ENCODE measurements at regions of chr12 and their contacts with region 1.

Region 1: DNA sequence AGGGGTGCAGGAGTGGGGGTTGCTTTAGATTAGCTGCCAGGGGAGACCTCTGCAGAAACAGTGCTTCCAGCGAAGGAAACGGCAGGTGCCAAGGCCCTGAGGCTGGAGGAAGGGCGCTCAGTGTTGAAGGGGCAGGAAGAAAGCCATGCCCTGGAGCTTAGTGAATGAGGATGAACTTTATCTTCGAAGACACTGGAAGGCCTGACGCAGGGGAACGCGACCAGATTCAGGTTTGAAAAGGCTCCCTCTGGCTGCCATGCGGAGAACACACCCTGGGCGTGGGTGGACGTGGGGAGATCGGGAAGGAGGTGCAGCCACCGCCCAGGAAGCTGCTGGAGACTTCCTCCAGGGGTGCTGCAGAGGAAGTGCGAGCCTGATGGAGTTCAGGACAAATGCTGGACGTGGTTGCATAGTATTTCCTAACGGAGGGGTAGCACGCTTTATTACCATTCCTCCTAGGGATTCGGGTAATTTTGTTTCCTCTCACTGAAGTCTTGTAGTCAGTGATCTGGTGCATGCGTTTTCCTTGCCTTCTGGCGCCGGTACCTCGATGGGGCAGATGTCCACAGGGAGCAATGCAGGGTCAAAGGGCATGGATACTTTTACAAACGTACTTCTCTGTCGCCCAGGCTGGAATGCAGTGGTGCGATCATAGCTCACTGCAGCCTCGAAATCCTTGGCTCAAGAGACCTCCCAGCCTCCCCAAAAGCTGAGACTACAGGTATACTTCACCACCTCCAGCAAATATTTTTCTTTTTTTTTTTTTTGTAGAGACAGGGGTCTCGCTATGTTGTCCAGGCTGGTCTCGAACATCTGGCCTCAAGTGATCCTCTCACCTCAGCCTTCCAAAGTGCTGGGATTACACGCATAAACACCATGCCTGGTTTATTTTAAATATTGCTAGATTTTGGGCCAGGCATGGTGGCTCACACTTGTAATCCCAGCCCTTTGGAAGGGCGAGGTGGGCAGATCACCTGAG is 26.4 kb upstream of the UBC start:
- DNase-seq: peak; percentile 75 to 92
- H3K4me3 ChIP-seq: peak overlapping the region; percentile 48 to 65
- H3K27ac ChIP-seq: peak overlapping the region; percentile 83 to 92
- H3K4me1 ChIP-seq: peaks cover 0 to 15% of the 10 kb centered on the region in 2 donors
- H3K27me3 ChIP-seq: no peaks in the 10 kb centered on the region
- CTCF ChIP-seq: peak; percentile 85 to 89 (median 88)

Region 2: GRCh38 chr12:124863416-124864325 is 77.2 kb before region 1 on chr12 and contains the start of gene SCARB1:
- intact Hi-C with region 1: loop called (anchors 5 kb)
- DNase-seq: peak; percentile 39 to 90
- H3K4me3 ChIP-seq: peak within 1 kb of the TSS; percentile 82 to 83
- H3K27ac ChIP-seq: peak within 1 kb of the TSS; percentile 36 to 61
- H3K4me1 ChIP-seq: peaks cover 0 to 7% of the 10 kb centered on the region in 2 donors
- H3K27me3 ChIP-seq: no peaks in the 10 kb centered on the region
- CTCF ChIP-seq: no peak
- total RNA-seq, gene SCARB1: 81.1 TPM

Region 3: GRCh38 chr12:124917135-124917840 is 23.6 kb before region 1 on chr12:
- intact Hi-C with region 1: loop called (anchors 1 kb)
- DNase-seq: peak; percentile 96 to 99
- H3K4me3 ChIP-seq: peak overlapping the region; percentile 45 to 72
- H3K27ac ChIP-seq: peak overlapping the region; percentile 99 to 100
- H3K4me1 ChIP-seq: peaks cover 5 to 39% of the 10 kb centered on the region in 2 donors
- H3K27me3 ChIP-seq: no peaks in the 10 kb centered on the region
- CTCF ChIP-seq: no peak

Region 4: GRCh38 chr12:124927201-124928094 is 13.4 kb before region 1 on chr12:
- intact Hi-C with region 1: loop called (anchors 1 kb)
- DNase-seq: peak; percentile 74 to 97
- H3K4me3 ChIP-seq: peak overlapping the region; percentile 57 to 67
- H3K27ac ChIP-seq: peak overlapping the region; percentile 88 to 93
- H3K4me1 ChIP-seq: peaks cover 0 to 5% of the 10 kb centered on the region in 2 donors
- H3K27me3 ChIP-seq: no peaks in the 10 kb centered on the region
- CTCF ChIP-seq: no peak

Region 5: DNA sequence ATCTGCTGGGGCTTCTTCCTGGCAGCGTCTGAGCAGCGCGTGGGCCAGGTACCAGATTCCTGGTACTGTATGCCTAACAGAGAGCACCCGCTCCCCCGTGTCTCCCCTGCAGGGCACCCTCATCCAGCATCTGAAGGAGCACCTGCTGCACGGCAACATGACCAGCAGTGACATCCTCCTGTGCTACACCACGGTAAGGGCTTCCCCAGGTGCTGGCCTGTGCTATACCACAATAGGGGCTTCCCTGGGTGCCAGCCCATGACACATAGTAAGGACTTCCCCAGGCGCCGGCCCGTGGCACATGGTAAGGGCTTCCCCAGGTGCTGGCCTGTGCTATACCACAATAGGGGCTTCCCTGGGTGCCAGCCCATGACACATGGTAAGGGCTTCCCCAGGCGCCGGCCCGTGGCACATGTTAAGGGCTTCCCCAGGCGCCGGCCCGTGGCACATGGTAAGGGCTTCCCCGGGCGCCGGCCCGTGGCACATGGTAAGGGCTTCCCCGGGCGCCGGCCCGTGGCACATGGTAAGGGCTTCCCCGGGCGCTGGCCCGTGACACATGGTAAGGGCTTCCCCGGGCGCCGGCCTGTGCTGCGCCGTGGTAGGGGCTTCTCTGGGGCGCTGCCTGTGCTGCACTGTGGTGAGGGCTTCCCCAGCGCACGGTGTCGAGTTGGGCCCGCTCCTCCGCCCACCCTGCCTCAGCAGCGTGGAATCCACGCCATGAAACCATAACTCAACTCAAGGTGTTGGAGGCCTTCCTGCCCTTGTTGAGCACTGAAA is 173.7 kb after region 1 on chr12:
- intact Hi-C with region 1: no loop called
- DNase-seq: no peak
- H3K4me3 ChIP-seq: no peak overlapping the region
- H3K27ac ChIP-seq: no peak overlapping the region
- H3K4me1 ChIP-seq: no peaks in the 10 kb centered on the region
- H3K27me3 ChIP-seq: no peaks in the 10 kb centered on the region
- CTCF ChIP-seq: no peak